ENCODE measurements at regions of chr20 and their contacts with region 1.

Region 1: GRCh38 chr20:1776681-1777475 is 118.3 kb upstream of the SIRPA start:
- DNase-seq: peak; percentile 95
- ATAC-seq: peak; percentile 87
- H3K4me3 ChIP-seq: peak overlapping the region; percentile 63
- H3K27ac ChIP-seq: peak overlapping the region; percentile 75
- H3K4me1 ChIP-seq: peaks cover 28% of the 10 kb centered on the region
- H3K27me3 ChIP-seq: no peaks in the 10 kb centered on the region
- CTCF ChIP-seq: peak; percentile 81

Region 2: GRCh38 chr20:1466211-1467081 is 310.4 kb before region 1 on chr20 and contains the start of gene NSFL1C:
- CTCF ChIA-PET with region 1: interaction called, 3 read pairs
- POLR2A ChIA-PET with region 1: no interaction called
- intact Hi-C with region 1: loop called (anchors 1 kb)
- DNase-seq: peak; percentile 99
- ATAC-seq: peak; percentile 77
- H3K4me3 ChIP-seq: peak within 1 kb of the TSS; percentile 77
- H3K27ac ChIP-seq: peak within 1 kb of the TSS; percentile 85
- H3K4me1 ChIP-seq: peaks cover 49% of the 10 kb centered on the region
- H3K27me3 ChIP-seq: no peaks in the 10 kb centered on the region
- CTCF ChIP-seq: peak; percentile 91
- total RNA-seq, gene NSFL1C: 170 and 217 TPM in 2 replicates

Region 3: GRCh38 chr20:1509237-1509636 is 267.6 kb before region 1 on chr20:
- CTCF ChIA-PET with region 1: interaction called, 32 read pairs
- POLR2A ChIA-PET with region 1: no interaction called
- intact Hi-C with region 1: loop called (anchors 1 kb)
- DNase-seq: peak; percentile 90
- ATAC-seq: peak; percentile 85
- H3K4me3 ChIP-seq: no peak overlapping the region
- H3K27ac ChIP-seq: peak overlapping the region; percentile 41
- H3K4me1 ChIP-seq: peaks cover 50% of the 10 kb centered on the region
- H3K27me3 ChIP-seq: no peaks in the 10 kb centered on the region
- CTCF ChIP-seq: peak; percentile 89

Region 4: GRCh38 chr20:1567392-1568162 is 209.3 kb before region 1 on chr20:
- CTCF ChIA-PET with region 1: interaction called, 5 read pairs
- POLR2A ChIA-PET with region 1: interaction called, 11 read pairs
- intact Hi-C with region 1: no loop called
- DNase-seq: peak; percentile 99
- ATAC-seq: peak; percentile 79
- H3K4me3 ChIP-seq: no peak overlapping the region
- H3K27ac ChIP-seq: peak overlapping the region; percentile 98
- H3K4me1 ChIP-seq: peaks cover 47% of the 10 kb centered on the region
- H3K27me3 ChIP-seq: no peaks in the 10 kb centered on the region
- CTCF ChIP-seq: no peak

Region 5: DNA sequence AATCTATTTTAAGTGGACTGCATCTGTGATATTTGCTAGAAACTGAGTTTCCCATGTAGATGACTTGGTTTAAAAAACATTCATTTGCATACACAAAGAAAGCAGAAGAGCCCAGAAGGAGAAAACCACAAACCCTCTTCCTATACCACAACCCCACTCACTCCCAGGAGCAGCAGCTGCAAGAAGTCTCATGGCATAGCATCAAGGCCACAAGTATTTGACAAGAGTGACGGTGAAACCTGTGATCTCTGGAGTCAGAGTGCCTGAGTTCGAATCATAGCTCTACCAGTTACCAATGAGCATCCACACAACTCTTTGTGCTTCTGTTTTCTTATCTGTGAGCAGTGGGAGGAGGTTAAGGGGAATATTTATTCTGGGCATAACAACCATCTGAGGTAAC is 74.5 kb before region 1 on chr20:
- CTCF ChIA-PET with region 1: no interaction called
- POLR2A ChIA-PET with region 1: no interaction called
- intact Hi-C with region 1: no loop called
- DNase-seq: no peak
- ATAC-seq: no peak
- H3K4me3 ChIP-seq: no peak overlapping the region
- H3K27ac ChIP-seq: no peak overlapping the region
- H3K4me1 ChIP-seq: 0 out of 2 replicates have a peak, but pooled peaks cover 7% of the 10 kb centered on the region
- H3K27me3 ChIP-seq: no peaks in the 10 kb centered on the region
- CTCF ChIP-seq: no peak

Region 6: DNA sequence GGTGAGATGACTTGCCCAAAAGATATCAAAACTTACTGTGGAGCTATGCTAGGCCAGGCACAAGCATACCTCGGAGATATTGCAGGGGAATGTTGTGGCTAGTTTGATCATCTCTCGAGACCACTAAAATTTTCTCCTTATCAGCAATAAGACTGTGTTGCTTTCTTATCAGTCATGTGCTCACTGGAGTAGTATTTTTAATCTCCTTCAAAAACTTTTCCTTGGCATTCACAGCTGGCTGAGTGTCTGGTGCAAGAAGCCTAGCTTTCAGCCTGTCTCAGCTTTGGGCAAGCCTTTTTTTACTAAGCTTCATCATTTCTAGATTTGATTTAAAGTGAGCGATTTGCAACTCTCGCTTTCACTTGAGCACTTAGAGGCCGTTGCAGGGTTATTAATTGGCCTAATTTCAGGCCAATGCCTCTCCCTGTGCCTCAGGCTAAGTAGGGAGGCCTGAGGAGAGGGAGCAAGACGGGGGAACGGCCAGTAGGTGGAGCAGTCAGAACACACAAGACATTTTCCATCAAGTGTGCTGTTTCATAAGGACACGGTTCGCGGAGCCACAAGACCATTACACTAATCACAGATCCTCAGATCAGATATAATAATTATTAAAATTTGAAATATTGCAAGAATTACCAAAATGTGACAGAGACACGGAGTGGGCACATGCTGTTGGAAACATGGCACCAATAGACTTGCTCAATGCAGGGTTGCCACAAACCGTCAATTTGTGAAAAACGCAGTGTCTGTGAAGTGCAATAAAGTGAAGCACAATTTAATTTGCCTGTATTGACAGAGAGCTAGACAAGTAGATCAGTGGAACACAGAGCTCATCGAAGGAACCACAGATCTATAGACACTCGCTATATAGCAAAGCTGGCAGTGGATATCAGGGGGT is 12.5 kb before region 1 on chr20:
- CTCF ChIA-PET with region 1: interaction called, 19 read pairs
- POLR2A ChIA-PET with region 1: no interaction called
- intact Hi-C with region 1: no loop called
- DNase-seq: peak; percentile 84
- ATAC-seq: peak; percentile 86
- H3K4me3 ChIP-seq: no peak overlapping the region
- H3K27ac ChIP-seq: peak overlapping the region; percentile 13; the same call in 1 of the 2 replicates
- H3K4me1 ChIP-seq: peaks cover 31% of the 10 kb centered on the region
- H3K27me3 ChIP-seq: no peaks in the 10 kb centered on the region
- CTCF ChIP-seq: peak; percentile 95

Region 7: GRCh38 chr20:1860446-1860845 is 83.6 kb after region 1 on chr20:
- CTCF ChIA-PET with region 1: no interaction called
- POLR2A ChIA-PET with region 1: no interaction called
- intact Hi-C with region 1: no loop called
- DNase-seq: peak; percentile 13
- ATAC-seq: no peak
- H3K4me3 ChIP-seq: no peak overlapping the region
- H3K27ac ChIP-seq: no peak overlapping the region
- H3K4me1 ChIP-seq: no peaks in the 10 kb centered on the region
- H3K27me3 ChIP-seq: peaks cover 7% of the 10 kb centered on the region; the same call in 1 of the 2 replicates
- CTCF ChIP-seq: no peak

Region 8: DNA sequence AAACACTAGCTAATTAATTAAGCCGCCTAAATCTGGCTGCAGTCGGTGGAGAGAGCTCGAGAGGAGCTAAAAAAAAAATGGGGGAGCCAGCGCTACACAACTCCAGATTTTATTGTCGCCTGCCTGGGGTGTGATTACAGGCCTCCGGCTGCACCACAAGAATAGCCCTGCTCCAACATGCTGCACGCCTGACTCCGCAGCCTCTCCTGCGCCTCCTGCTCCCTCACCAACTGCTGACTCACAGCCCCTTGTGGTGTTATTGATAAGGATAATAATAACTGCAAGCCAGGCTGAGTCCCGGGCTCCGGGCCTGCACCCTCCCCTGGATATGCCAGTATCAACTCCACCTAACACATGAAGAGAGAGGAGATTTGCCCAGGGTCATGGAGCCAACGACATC is 135.2 kb after region 1 on chr20:
- CTCF ChIA-PET with region 1: no interaction called
- POLR2A ChIA-PET with region 1: no interaction called
- intact Hi-C with region 1: no loop called
- DNase-seq: no peak
- ATAC-seq: no peak
- H3K4me3 ChIP-seq: no peak overlapping the region
- H3K27ac ChIP-seq: no peak overlapping the region
- H3K4me1 ChIP-seq: no peaks in the 10 kb centered on the region
- H3K27me3 ChIP-seq: no peaks in the 10 kb centered on the region
- CTCF ChIP-seq: no peak

Region 9: DNA sequence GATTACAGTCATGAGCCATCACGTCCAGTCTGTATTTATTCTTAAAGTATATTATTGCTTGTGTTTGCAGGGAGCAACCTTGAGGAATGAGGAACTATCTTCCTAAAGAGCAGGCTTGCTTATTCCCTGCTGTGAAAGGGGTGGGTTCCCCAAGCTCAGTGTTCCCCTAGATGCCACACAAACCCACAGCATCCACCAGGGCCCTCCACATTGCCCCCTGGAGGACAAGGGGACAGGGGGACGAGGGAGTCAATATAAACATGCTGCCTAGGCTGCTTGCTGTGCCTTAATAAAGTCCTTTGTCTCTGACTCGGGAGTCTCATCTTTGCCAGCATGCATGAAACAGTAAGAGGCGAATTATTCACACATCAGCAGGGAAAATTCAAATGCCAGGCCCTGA is 895.1 kb after region 1 on chr20:
- CTCF ChIA-PET with region 1: no interaction called
- POLR2A ChIA-PET with region 1: interaction called, 10 read pairs
- intact Hi-C with region 1: no loop called
- DNase-seq: no peak
- ATAC-seq: no peak
- H3K4me3 ChIP-seq: no peak overlapping the region
- H3K27ac ChIP-seq: no peak overlapping the region
- H3K4me1 ChIP-seq: no peaks in the 10 kb centered on the region
- H3K27me3 ChIP-seq: 0 out of 2 replicates have a peak, but pooled peaks cover 4% of the 10 kb centered on the region
- CTCF ChIP-seq: peak; percentile 41